ENCODE measurements at regions of chr5 and their contacts with region 1.

Region 1: GRCh38 chr5:39235648-39236047 is 16.3 kb upstream of the FYB1 start:
- DNase-seq: no peak
- ATAC-seq: no peak
- H3K4me3 ChIP-seq: no peak overlapping the region
- H3K27ac ChIP-seq: no peak overlapping the region
- H3K4me1 ChIP-seq: no peaks in the 10 kb centered on the region; a peak in 1 of 5 replicates
- H3K27me3 ChIP-seq: no peaks in the 10 kb centered on the region; a peak in 1 of 5 replicates
- CTCF ChIP-seq: no peak
- EP300 ChIP-seq: no peak
- POLR2A ChIP-seq: no peak
- RAD21 ChIP-seq: no peak

Region 2: GRCh38 chr5:39224196-39224761 is 11.4 kb before region 1 on chr5:
- CTCF ChIA-PET with region 1: no interaction called
- POLR2A ChIA-PET with region 1: interaction called, 10 read pairs
- in situ Hi-C with region 1: no loop called
- intact Hi-C with region 1: no loop called
- DNase-seq: peak; percentile 45 to 87 (median 70)
- ATAC-seq: peak; percentile 99
- H3K4me3 ChIP-seq: no peak overlapping the region
- H3K27ac ChIP-seq: peak overlapping the region; percentile 34; the same call in 1 of the 3 replicates
- H3K4me1 ChIP-seq: peaks cover 4 to 22% of the 10 kb centered on the region in 2 experiments; a peak in 4 of 5 replicates
- H3K27me3 ChIP-seq: no peaks in the 10 kb centered on the region; a peak in 1 of 5 replicates
- CTCF ChIP-seq: peak in 2 of 3 experiments; percentile 32 to 35; a peak in 3 of 6 replicates
- EP300 ChIP-seq: no peak
- POLR2A ChIP-seq: no peak
- RAD21 ChIP-seq: peak; percentile 48 to 64